Mammary epithelial cell (primary cell): ENCODE measurements at regions of chr5 and their contacts with region 1.

Region 1: GRCh38 chr5:151825445-151825844 is 53.7 kb downstream of the G3BP1 start:
- DNase-seq: peak; percentile 44
- H3K4me3 ChIP-seq: no peak overlapping the region
- H3K27ac ChIP-seq: no peak overlapping the region
- H3K4me1 ChIP-seq: no peaks in the 10 kb centered on the region
- H3K27me3 ChIP-seq: no peaks in the 10 kb centered on the region
- CTCF ChIP-seq: peak; percentile 87

Region 2: DNA sequence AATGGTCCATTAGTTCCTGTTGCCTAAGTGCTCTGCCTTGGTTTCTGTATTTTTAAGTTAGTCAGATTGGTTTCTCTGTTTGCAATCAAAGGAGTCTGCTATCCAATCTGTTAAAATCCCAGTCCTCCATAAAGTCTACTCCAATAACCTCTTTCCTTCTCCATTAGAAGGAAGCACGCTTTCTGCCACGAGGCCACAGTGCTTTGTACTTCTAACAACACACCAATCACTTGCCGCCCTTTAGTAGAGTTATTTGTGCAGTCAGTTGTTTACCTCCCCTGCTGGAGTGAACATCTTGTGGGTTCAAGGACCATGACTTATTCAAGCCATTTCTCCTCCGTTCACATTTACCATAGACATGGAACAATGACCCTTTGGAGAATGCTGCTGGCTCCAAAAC is 30.3 kb after region 1 on chr5:
- CTCF ChIA-PET with region 1: no interaction called
- dilution Hi-C with region 1: no loop called
- in situ Hi-C with region 1: no loop called
- intact Hi-C with region 1: no loop called
- DNase-seq: no peak
- H3K4me3 ChIP-seq: no peak overlapping the region
- H3K27ac ChIP-seq: no peak overlapping the region
- H3K4me1 ChIP-seq: no peaks in the 10 kb centered on the region
- H3K27me3 ChIP-seq: no peaks in the 10 kb centered on the region
- CTCF ChIP-seq: no peak

Region 3: GRCh38 chr5:151924564-151925301 is 99.3 kb after region 1 on chr5 and contains the start of gene GLRA1:
- CTCF ChIA-PET with region 1: interaction called, 3 read pairs
- dilution Hi-C with region 1: no loop called
- in situ Hi-C with region 1: no loop called
- intact Hi-C with region 1: loop called (anchors 5 kb)
- DNase-seq: peak; percentile 25
- H3K4me3 ChIP-seq: no peak within 1 kb of the TSS
- H3K27ac ChIP-seq: no peak within 1 kb of the TSS
- H3K4me1 ChIP-seq: no peaks in the 10 kb centered on the region
- H3K27me3 ChIP-seq: no peaks in the 10 kb centered on the region
- CTCF ChIP-seq: no peak
- total RNA-seq, gene GLRA1: not detected

Region 4: DNA sequence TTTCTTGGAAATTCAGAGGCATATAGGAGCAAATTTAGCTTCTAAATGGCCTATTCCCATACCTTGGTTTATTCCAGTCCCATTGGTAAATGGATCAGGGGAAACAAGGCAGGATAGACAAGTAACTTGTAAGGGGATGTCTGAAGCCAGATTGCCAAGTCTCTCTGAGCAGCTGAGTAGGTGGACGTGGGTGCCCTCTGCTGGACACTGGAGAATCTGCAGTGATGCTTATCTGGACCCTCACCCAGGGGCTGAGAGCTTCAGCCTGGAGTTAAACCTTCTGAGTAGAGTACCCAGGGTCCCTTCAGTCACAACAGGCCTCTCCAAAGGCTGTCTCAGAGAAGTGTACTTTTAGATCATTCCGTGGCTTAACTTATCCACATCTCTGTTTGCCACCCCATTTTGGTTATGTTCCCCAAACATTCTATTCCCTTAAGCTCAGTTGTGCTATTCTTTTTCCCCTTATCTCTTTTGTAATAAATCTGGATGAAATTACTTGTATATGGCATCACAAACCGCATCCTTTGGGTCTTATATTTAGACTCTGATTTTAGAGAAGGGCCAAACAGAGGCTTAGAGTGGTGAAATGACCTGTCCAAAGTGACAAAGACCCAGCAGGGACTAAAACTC is 317.5 kb after region 1 on chr5:
- CTCF ChIA-PET with region 1: interaction called, 17 read pairs
- dilution Hi-C with region 1: loop called (anchors 25 kb)
- in situ Hi-C with region 1: loop called (anchors 10 kb)
- intact Hi-C with region 1: loop called (anchors 1 kb)
- DNase-seq: peak; percentile 21
- H3K4me3 ChIP-seq: no peak overlapping the region
- H3K27ac ChIP-seq: no peak overlapping the region
- H3K4me1 ChIP-seq: no peaks in the 10 kb centered on the region
- H3K27me3 ChIP-seq: no peaks in the 10 kb centered on the region
- CTCF ChIP-seq: peak; percentile 86 to 95

Region 5: GRCh38 chr5:152288499-152288898 is 463.1 kb after region 1 on chr5:
- CTCF ChIA-PET with region 1: no interaction called
- dilution Hi-C with region 1: no loop called
- in situ Hi-C with region 1: loop called in 1 of 2 experiments (anchors 25 kb)
- intact Hi-C with region 1: no loop called
- DNase-seq: no peak
- H3K4me3 ChIP-seq: no peak overlapping the region
- H3K27ac ChIP-seq: no peak overlapping the region
- H3K4me1 ChIP-seq: no peaks in the 10 kb centered on the region
- H3K27me3 ChIP-seq: peaks cover 2% of the 10 kb centered on the region
- CTCF ChIP-seq: no peak

Region 6: DNA sequence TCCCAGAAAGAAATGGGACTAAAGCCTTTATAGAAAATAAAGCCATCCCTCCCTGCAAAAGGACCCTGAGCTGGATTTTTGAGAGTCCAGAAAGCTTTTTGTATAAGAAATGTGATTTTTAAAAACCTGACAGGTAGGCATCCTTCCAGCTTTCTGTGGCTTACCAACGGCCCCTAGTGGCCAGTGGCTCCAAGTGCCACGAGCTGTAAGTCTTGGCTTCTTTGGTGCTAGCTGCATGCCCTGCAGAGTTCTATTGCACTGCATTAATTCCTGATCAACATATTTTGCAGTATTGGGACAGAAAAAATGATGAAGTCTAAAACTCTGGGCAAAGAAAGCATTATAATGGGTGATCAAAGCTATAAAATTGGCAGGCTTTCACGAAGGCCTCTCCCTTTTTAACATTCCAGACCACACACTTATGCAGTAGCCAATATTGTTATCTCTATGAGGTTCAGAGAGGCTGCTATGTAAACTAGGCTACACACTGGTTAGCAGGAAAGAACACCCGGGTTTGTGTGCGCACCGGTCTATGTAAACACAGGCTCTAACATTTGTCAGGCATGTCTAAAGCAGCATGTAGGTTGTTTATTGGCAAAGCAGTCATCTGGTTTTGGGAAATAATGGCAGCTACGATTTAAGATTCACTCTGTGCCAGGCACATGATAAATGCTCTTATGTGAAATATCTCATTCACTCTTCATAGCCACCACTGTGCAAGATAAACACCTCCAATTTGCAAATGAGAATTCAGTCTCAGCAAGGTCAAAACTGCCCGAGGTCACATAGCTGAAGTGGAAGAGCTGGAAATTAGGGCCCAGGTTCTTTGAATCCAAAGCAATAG is 524.5 kb after region 1 on chr5:
- CTCF ChIA-PET with region 1: no interaction called
- dilution Hi-C with region 1: no loop called
- in situ Hi-C with region 1: no loop called
- intact Hi-C with region 1: loop called (anchors 2 kb)
- DNase-seq: peak; percentile 24
- H3K4me3 ChIP-seq: no peak overlapping the region
- H3K27ac ChIP-seq: no peak overlapping the region
- H3K4me1 ChIP-seq: no peaks in the 10 kb centered on the region
- H3K27me3 ChIP-seq: no peaks in the 10 kb centered on the region
- CTCF ChIP-seq: peak; percentile 94 to 97

Region 7: DNA sequence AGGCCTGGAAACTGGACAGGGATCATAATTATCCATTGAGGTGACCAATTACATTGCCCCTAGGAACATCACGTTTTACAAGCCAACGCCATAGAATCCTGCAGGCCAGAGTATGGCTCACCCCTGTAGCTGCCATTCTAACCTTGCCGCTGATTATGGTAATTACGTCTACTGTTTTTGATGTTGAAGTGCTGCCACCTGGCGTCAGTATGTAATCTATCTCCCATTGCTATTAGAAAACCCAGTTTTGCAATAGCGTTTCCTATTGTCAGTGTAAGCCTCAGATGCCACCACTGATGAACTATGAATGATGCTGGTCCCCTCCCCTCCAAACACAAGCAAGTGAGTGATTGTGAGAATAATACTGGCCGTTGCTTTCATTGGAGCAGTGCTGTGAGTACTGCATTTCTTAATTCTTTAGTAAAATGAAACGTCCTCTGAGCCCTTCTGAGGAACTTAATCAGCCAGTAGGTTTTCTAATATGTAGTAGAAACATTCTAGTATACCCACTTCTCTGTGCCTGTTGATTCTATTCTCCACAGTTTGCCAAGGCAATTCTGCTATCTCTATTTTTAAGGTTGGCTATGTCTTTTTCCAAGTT is 680.1 kb after region 1 on chr5:
- CTCF ChIA-PET with region 1: no interaction called
- dilution Hi-C with region 1: no loop called
- in situ Hi-C with region 1: no loop called
- intact Hi-C with region 1: loop called (anchors 1 kb)
- DNase-seq: peak; percentile 51
- H3K4me3 ChIP-seq: no peak overlapping the region
- H3K27ac ChIP-seq: no peak overlapping the region
- H3K4me1 ChIP-seq: no peaks in the 10 kb centered on the region
- H3K27me3 ChIP-seq: no peaks in the 10 kb centered on the region
- CTCF ChIP-seq: peak; percentile 56 to 67